Activated T-helper 1 cell treated with anti-CD3 and anti-CD28 coated beads, Interleukin-12 subunit alpha, Interleukin-12 subunit beta, Interleukin-2, Interleukin-4 antibody, amounts not matched to agents 30 ng/mL and 10 ng/mL and 1 ng/mL, durations not matched to agents 14 hours and 24 hours and 36 hours (primary cell): ENCODE measurements at regions of chr19 and their contacts with region 1.

Region 1: DNA sequence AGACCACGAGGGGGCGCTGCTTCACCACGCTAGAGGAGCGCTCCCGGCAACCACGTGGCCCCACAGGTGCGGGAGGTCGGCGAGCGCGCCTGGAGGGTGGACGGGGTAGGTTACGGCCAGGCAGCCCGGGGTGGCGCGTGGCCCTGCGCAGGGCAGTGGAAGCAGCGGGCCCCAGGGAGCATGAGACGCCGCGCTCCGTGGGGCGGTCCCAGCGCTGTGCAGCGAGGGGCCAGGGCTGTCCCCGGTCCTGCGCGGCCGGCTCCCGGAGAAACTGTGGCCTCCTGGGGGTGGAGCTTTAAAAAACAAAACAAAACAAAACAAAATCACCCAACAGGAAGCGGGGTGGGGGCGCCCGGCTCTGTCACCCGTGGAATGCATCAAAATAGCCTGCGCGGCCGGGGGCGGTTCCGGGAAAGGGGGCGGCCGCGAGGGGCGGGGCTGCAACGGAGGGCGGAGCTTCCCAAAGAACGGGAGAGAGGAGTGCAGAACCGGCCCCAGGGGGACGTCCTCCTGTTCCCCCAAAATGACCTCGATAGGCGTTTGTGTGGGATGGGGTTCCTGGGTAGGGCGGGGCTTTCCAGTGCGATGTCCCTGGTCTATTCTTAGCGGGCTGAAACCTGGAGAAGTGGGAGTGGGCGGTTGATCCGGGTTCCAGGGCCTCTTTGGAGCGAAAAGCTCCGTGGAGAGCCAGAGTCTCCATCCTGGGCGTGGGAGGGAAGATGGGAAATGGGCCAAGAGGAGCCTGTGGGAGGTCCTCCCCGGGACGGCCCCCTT is 27.3 kb downstream of the NUMBL start:
- DNase-seq: peak; percentile 87
- H3K4me3 Mint-ChIP-seq: peak overlapping the region; percentile 80
- H3K27ac Mint-ChIP-seq: peak overlapping the region; percentile 86
- H3K4me1 Mint-ChIP-seq: peaks cover 20% of the 10 kb centered on the region
- H3K27me3 Mint-ChIP-seq: peaks cover 2% of the 10 kb centered on the region

Region 2: DNA sequence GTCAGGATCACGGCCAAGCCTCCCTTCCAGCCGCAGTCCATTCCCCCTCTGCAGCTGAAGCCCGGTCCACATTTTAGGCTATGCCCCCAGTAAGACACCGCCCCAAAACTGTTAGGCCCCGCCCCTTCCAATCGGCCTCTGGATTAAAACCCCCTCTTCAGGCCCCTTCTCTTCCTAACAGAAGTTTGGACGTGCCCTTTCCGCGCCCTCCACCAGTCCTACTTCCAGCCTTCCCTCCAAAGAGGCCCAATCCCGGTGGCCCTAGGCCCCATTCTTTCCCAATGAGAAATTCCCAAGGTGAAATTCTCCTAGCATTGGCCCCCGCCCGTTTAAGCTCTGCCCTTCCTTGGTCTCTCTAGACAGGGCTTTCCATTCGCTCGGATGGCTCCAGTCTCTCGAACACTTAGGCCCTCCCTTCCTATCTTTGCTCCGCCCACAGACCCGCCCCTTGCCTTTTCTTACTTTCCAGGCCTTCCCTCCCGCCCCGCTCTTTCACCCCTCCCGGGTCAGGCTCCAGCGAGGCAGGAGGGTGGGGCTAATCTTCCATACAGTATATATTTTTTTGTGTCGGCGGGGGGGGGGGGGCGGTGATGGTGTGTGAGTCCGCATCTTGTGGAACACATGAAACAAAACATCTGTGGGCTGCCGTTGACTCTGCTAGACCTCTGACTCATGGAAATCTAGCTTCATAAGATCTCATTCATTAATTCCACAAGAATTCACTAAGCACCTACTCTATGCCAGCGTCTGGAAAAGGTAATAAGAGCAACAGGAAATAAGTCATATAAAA is 48.3 kb before region 1 on chr19:
- intact Hi-C with region 1: loop called (anchors 1 kb)
- DNase-seq: peak; percentile 75
- H3K4me3 Mint-ChIP-seq: peak overlapping the region; percentile 97
- H3K27ac Mint-ChIP-seq: peak overlapping the region; percentile 100
- H3K4me1 Mint-ChIP-seq: peaks cover 41% of the 10 kb centered on the region
- H3K27me3 Mint-ChIP-seq: no peaks in the 10 kb centered on the region

Region 3: DNA sequence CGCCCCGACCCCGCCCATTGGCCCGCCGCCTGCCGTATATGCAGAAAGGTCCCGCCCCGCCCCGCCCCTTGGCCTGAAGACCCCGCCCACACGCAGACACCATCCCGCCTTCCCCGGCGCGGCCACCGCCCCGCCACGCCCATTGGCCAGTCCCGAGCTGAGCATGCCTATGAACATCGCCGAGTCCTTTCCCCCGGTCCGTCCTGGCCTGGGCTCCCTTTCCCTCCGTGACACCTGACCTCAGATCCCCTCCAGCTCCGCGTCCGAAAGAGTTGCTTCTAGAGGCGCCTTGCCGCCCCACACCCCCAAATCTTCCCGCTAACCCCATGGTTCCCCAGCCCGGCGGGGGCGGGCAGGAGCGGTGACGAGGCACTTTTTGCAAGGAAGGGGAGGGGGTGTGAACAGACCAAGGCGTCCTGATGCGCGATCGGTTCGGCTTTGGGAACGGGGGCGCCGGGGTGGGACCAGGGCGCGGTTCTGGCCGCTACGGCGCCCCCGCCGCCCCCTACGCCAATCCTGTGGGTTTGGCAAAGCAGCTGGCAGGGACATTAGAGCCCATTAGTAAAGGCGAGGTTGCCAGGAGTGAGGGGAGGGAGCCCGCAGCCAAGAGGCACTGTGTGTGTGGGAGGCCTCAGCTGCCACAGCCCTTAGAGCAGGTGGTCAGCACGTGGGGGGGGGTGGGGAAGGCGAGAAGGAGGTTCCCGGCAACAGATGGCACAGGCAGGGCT is 27.7 kb after region 1 on chr19:
- intact Hi-C with region 1: loop called (anchors 1 kb)
- DNase-seq: peak; percentile 80
- H3K4me3 Mint-ChIP-seq: peak overlapping the region; percentile 87
- H3K27ac Mint-ChIP-seq: peak overlapping the region; percentile 84
- H3K4me1 Mint-ChIP-seq: no peaks in the 10 kb centered on the region
- H3K27me3 Mint-ChIP-seq: no peaks in the 10 kb centered on the region

Region 4: GRCh38 chr19:40716655-40717324 is 53.7 kb after region 1 on chr19 and contains the starts of genes COQ8B and ITPKC:
- intact Hi-C with region 1: loop called (anchors 1 kb)
- DNase-seq: peak; percentile 100
- H3K4me3 Mint-ChIP-seq: peak within 1 kb of the TSS; percentile 97
- H3K27ac Mint-ChIP-seq: peak within 1 kb of the TSS; percentile 95
- H3K4me1 Mint-ChIP-seq: peaks cover 44% of the 10 kb centered on the region
- H3K27me3 Mint-ChIP-seq: no peaks in the 10 kb centered on the region
- total RNA-seq, gene COQ8B: 38.4 and 41.6 TPM in 2 replicates
- total RNA-seq, gene ITPKC: 8.7 and 9.9 TPM in 2 replicates

Region 5: GRCh38 chr19:40806488-40807468 is 143.7 kb after region 1 on chr19:
- intact Hi-C with region 1: loop called (anchors 1 kb)
- DNase-seq: peak; percentile 74
- H3K4me3 Mint-ChIP-seq: peak overlapping the region; percentile 97
- H3K27ac Mint-ChIP-seq: peak overlapping the region; percentile 98
- H3K4me1 Mint-ChIP-seq: peaks cover 82% of the 10 kb centered on the region
- H3K27me3 Mint-ChIP-seq: no peaks in the 10 kb centered on the region

Region 6: GRCh38 chr19:40822161-40822560 is 159.1 kb after region 1 on chr19:
- intact Hi-C with region 1: loop called (anchors 1 kb)
- DNase-seq: no peak
- H3K4me3 Mint-ChIP-seq: no peak overlapping the region
- H3K27ac Mint-ChIP-seq: no peak overlapping the region
- H3K4me1 Mint-ChIP-seq: peaks cover 24% of the 10 kb centered on the region
- H3K27me3 Mint-ChIP-seq: no peaks in the 10 kb centered on the region

Region 7: GRCh38 chr19:41144403-41144802 is 481.3 kb after region 1 on chr19:
- intact Hi-C with region 1: loop called (anchors 1 kb)
- DNase-seq: peak; percentile 80
- H3K4me3 Mint-ChIP-seq: no peak overlapping the region
- H3K27ac Mint-ChIP-seq: no peak overlapping the region
- H3K4me1 Mint-ChIP-seq: no peaks in the 10 kb centered on the region
- H3K27me3 Mint-ChIP-seq: peaks cover 18% of the 10 kb centered on the region

Region 8: DNA sequence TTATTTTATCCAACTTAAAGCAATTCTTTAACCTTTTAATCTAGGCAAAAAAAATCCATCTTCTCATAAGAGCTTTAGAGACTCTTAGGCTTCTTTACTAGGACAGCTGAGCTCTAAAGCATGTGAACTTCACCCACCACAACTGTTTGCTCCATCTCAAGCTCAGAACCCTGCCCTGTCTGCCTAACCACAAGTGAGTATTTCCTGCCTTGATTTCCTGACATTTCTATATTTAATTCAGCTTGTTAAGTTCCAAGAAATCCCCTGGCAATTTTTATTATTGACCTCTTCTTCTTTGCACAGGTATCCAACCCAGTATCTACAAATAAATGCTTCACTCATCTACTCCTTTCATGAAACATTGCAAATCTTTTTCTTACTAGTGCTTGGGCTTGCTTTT is 891.8 kb after region 1 on chr19:
- intact Hi-C with region 1: no loop called
- DNase-seq: no peak
- H3K4me3 Mint-ChIP-seq: peak overlapping the region; percentile 55
- H3K27ac Mint-ChIP-seq: peak overlapping the region; percentile 66
- H3K4me1 Mint-ChIP-seq: peaks cover 81% of the 10 kb centered on the region
- H3K27me3 Mint-ChIP-seq: no peaks in the 10 kb centered on the region